CD4-positive, alpha-beta memory T cell (primary cell): ENCODE measurements at regions of chr7 and their contacts with region 1.

Region 1: DNA sequence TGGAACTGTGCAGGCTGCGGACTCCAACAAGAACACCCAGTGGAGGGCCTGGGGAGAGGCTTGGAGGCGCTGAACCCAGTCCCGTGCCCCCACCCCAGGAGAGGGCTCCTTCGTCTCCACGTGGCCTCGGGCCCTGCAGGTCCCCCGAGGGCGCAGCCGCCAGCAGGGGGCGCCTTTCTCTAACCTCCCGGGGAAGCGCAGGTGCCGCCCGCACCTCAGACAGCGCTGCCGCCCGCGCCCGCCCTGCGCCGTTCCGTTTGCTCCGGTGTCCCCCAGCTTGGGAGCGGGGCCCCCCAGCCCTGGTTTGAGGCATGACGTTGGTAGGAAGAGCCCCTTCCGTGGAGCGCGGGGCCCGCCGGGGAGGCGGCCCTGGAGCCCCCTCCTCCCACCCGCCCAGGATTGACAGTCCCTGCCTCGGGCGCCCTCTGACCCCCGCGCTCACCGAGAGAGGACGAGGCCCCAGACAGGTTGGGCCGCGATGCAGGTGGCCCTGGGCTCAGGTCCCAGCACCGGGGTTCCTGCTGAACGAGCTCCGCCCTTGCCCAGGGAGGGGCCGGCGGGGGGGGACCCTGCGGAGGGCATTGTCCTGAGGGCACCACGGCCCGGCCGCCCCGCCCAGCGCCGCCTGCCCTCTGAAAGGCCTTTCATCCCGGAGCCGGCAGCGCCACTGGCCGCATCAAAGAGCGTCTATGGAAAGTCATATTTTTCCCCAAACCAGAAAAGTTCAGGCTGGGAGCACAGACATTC is 42.8 kb downstream of the FOXL3 start:
- DNase-seq: peak; percentile 77 to 85 (median 82)
- H3K4me3 ChIP-seq: peak overlapping the region in 1 of 2 donors; percentile 24
- H3K4me3 Mint-ChIP-seq: peak overlapping the region in 2 of 8 donors; percentile 38 to 41
- H3K27ac ChIP-seq: no peak overlapping the region
- H3K27ac Mint-ChIP-seq: no peak overlapping the region
- H3K4me1 ChIP-seq: no peaks in the 10 kb centered on the region
- H3K4me1 Mint-ChIP-seq: peaks cover 5 to 13% (median 8%) of the 10 kb centered on the region in 4 donors
- H3K27me3 ChIP-seq: no peaks in the 10 kb centered on the region
- H3K27me3 Mint-ChIP-seq: peaks cover 0 to 4% of the 10 kb centered on the region in 2 donors

Region 2: DNA sequence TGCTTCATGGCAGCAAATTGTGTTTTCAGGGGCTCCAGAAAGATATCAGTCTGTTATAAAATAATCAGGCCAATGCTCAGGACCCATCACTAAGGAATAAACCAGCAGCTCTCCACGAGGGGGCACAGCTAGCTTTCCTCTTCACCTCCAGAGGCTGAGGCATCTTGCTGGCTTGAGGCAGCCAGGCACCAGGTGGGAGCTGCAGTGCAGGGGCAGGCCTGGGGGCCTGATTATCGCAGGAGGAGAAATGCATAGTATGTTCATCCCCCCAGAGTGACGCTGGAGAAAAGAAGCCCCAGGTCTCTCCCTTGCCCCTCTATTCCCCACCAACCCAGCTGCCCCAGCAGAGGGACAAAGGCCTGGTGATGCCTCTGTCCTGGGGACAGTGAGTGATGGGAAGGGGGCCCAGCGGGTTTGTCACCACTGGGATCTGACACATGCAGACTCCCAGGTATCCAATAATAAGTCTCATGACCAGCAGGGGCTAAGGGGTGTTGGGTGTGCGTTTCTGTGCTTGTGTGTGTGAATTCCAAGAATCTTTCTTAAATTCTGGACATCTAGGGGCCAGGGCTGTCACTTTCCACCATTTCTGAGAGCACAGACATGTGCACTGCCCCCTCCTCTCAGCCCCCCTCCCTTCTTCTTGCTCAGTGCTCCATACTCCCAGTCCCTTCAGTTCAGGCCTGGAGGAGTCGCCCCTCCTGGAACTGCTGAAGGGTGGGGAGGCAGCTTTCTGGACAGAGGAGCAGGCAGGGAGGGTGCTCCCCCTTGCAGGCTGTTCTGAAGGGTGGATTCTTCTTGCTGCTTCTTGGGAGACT is 268.5 kb before region 1 on chr7:
- CTCF ChIA-PET with region 1: no interaction called
- POLR2A ChIA-PET with region 1: no interaction called
- intact Hi-C with region 1: no loop called
- DNase-seq: no peak
- H3K4me3 ChIP-seq: no peak overlapping the region
- H3K4me3 Mint-ChIP-seq: no peak overlapping the region
- H3K27ac ChIP-seq: no peak overlapping the region
- H3K27ac Mint-ChIP-seq: no peak overlapping the region
- H3K4me1 ChIP-seq: no peaks in the 10 kb centered on the region
- H3K4me1 Mint-ChIP-seq: no peaks in the 10 kb centered on the region
- H3K27me3 ChIP-seq: no peaks in the 10 kb centered on the region
- H3K27me3 Mint-ChIP-seq: peaks cover 0 to 2% of the 10 kb centered on the region in 2 donors

Region 3: GRCh38 chr7:362402-363096 is 29.7 kb after region 1 on chr7:
- CTCF ChIA-PET with region 1: interaction called, 10 read pairs
- POLR2A ChIA-PET with region 1: interaction called, 7 read pairs
- intact Hi-C with region 1: no loop called
- DNase-seq: peak; percentile 49 to 61 (median 56)
- H3K4me3 ChIP-seq: peak overlapping the region; percentile 13 to 21
- H3K4me3 Mint-ChIP-seq: peak overlapping the region; percentile 60 to 94 (median 76)
- H3K27ac ChIP-seq: peak overlapping the region; percentile 29
- H3K27ac Mint-ChIP-seq: peak overlapping the region; percentile 68 to 95 (median 85)
- H3K4me1 ChIP-seq: peaks cover 72% of the 10 kb centered on the region
- H3K4me1 Mint-ChIP-seq: peaks cover 40 to 68% (median 62%) of the 10 kb centered on the region in 4 donors
- H3K27me3 ChIP-seq: no peaks in the 10 kb centered on the region
- H3K27me3 Mint-ChIP-seq: no peaks in the 10 kb centered on the region

Region 4: GRCh38 chr7:518630-519483 is 186.0 kb after region 1 on chr7:
- CTCF ChIA-PET with region 1: no interaction called
- POLR2A ChIA-PET with region 1: no interaction called
- intact Hi-C with region 1: loop called (anchors 5 kb)
- DNase-seq: peak in 1 of 5 donors; percentile 19
- H3K4me3 ChIP-seq: no peak overlapping the region
- H3K4me3 Mint-ChIP-seq: peak overlapping the region; percentile 57 to 87 (median 74)
- H3K27ac ChIP-seq: no peak overlapping the region
- H3K27ac Mint-ChIP-seq: no peak overlapping the region
- H3K4me1 ChIP-seq: peaks cover 25% of the 10 kb centered on the region
- H3K4me1 Mint-ChIP-seq: peaks cover 8 to 22% (median 14%) of the 10 kb centered on the region in 4 donors
- H3K27me3 ChIP-seq: peaks cover 8% of the 10 kb centered on the region
- H3K27me3 Mint-ChIP-seq: peaks cover 17 to 24% of the 10 kb centered on the region in 2 donors

Region 5: GRCh38 chr7:636396-636795 is 303.6 kb after region 1 on chr7:
- CTCF ChIA-PET with region 1: interaction called, 37 read pairs
- POLR2A ChIA-PET with region 1: no interaction called
- intact Hi-C with region 1: no loop called
- DNase-seq: peak; percentile 45 to 57 (median 51)
- H3K4me3 ChIP-seq: no peak overlapping the region
- H3K4me3 Mint-ChIP-seq: peak overlapping the region in 1 of 8 donors; percentile 41
- H3K27ac ChIP-seq: no peak overlapping the region
- H3K27ac Mint-ChIP-seq: peak overlapping the region in 3 of 7 donors; percentile 76 to 82 (median 82)
- H3K4me1 ChIP-seq: peaks cover 4% of the 10 kb centered on the region
- H3K4me1 Mint-ChIP-seq: peaks cover 8 to 26% (median 10%) of the 10 kb centered on the region in 4 donors
- H3K27me3 ChIP-seq: no peaks in the 10 kb centered on the region
- H3K27me3 Mint-ChIP-seq: no peaks in the 10 kb centered on the region

Region 6: DNA sequence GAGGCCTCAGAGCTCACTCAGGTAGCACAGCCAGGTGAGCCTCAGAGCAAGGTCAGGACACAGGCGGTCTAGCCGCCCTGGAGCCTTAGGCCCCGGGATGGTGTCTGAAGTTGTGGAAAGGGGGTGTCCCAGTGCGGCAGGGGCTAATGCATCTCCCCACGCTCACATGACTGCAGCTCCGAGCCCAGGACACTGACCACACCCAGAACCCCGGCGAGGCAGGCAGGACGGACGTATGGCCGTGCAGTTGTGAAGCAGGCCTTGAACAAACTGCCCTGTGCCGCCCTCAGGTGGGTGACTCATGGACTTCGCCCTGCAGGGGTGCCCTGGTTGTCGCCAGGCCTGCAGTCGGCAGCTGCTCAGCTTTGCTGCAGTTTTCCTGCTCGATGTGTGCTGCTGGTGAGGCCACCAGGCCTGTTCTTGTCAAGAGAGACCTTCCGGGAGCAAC is 399.3 kb after region 1 on chr7:
- CTCF ChIA-PET with region 1: interaction called, 8 read pairs
- POLR2A ChIA-PET with region 1: no interaction called
- intact Hi-C with region 1: loop called (anchors 1 kb)
- DNase-seq: peak in 1 of 5 donors; percentile 12
- H3K4me3 ChIP-seq: no peak overlapping the region
- H3K4me3 Mint-ChIP-seq: no peak overlapping the region
- H3K27ac ChIP-seq: no peak overlapping the region
- H3K27ac Mint-ChIP-seq: peak overlapping the region in 1 of 7 donors; percentile 48
- H3K4me1 ChIP-seq: peaks cover 9% of the 10 kb centered on the region
- H3K4me1 Mint-ChIP-seq: peaks cover 11 to 20% (median 15%) of the 10 kb centered on the region in 4 donors
- H3K27me3 ChIP-seq: no peaks in the 10 kb centered on the region
- H3K27me3 Mint-ChIP-seq: no peaks in the 10 kb centered on the region

Region 7: DNA sequence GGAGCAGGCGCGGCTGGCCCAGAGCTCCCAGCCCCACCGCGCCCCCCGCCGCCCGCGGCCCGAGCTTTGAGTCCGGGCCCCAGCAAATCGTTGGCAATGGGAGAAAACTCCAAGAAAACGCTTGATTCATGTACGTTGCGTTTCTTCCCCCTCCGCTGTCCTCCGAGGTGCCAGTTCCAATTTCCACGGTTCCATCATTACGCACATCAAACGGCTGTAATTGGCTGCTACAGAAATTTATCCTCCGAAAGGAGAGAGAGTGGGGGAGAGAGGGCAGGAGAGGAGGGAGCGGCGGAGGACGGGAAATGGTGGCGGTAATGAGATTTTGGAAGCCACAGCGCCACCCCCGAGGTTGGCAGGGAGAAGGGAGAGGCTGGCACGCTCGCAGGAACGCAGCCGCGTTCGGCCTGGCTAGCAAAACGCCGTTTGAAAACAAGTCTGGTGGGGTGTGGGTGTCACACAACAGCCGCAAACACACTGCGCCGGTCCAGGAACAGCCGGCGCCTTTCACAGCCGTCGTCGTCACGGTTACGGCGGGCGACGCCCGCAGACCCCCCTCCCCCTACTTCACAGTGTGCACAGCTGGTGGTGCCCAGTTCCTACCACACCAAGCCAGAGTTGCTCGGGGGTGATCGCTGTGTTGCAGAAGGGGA is 957.3 kb after region 1 on chr7:
- CTCF ChIA-PET with region 1: no interaction called
- POLR2A ChIA-PET with region 1: no interaction called
- intact Hi-C with region 1: no loop called
- DNase-seq: peak in 4 of 5 donors; percentile 12 to 23 (median 17)
- H3K4me3 ChIP-seq: peak overlapping the region in 1 of 2 donors; percentile 41
- H3K4me3 Mint-ChIP-seq: peak overlapping the region; percentile 66 to 88 (median 80)
- H3K27ac ChIP-seq: no peak overlapping the region
- H3K27ac Mint-ChIP-seq: peak overlapping the region in 1 of 7 donors; percentile 37
- H3K4me1 ChIP-seq: peaks cover 9% of the 10 kb centered on the region
- H3K4me1 Mint-ChIP-seq: peaks cover 2 to 11% (median 8%) of the 10 kb centered on the region in 4 donors
- H3K27me3 ChIP-seq: peaks cover 7% of the 10 kb centered on the region
- H3K27me3 Mint-ChIP-seq: peaks cover 4% of the 10 kb centered on the region in 2 donors